Naive thymus-derived CD4-positive, alpha-beta T cell (primary cell): ENCODE measurements at regions of chr13 and their contacts with region 1.

Region 1: DNA sequence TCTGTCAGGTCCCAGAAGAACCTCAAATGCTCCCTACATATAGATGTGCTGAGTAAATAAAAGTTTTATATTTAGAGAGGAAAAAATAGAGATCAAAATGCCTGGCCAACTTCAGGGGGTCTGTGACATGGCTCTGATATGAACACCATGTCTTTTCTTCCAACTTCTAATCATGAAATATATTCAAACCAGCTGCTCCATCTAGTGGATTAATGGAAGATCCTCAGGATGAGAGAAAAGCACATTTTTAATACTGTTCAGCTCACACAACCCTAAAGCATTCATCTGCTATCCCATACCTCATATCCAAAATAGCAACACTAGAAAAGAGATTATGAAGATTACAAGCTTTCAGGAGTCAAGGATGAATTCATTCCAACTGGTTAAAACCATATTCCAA is 56.0 kb upstream of the DOCK9 start:
- DNase-seq: peak in 5 of 9 donors; percentile 33 to 53 (median 41)
- ATAC-seq: peak; percentile 69
- H3K4me3 ChIP-seq: no peak overlapping the region
- H3K4me3 Mint-ChIP-seq: peak overlapping the region in 2 of 10 donors; percentile 2
- H3K27ac ChIP-seq: no peak overlapping the region
- H3K27ac Mint-ChIP-seq: peak overlapping the region in 6 of 9 donors; percentile 0 to 81 (median 18)
- H3K4me1 ChIP-seq: peaks cover 0 to 15% of the 10 kb centered on the region in 2 donors
- H3K4me1 Mint-ChIP-seq: peaks cover 18 to 66% (median 59%) of the 10 kb centered on the region in 7 donors
- H3K27me3 ChIP-seq: no peaks in the 10 kb centered on the region
- H3K27me3 Mint-ChIP-seq: peaks cover 0 to 9% (median 0%) of the 10 kb centered on the region in 5 donors

Region 2: GRCh38 chr13:98869408-98870090 is 164.3 kb before region 1 on chr13:
- CTCF ChIA-PET with region 1: interaction called, 3 read pairs
- POLR2A ChIA-PET with region 1: interaction called, 3 read pairs
- intact Hi-C with region 1: loop called (anchors 1 to 5 kb)
- DNase-seq: peak in 1 of 9 donors; percentile 3
- ATAC-seq: no peak
- H3K4me3 ChIP-seq: no peak overlapping the region
- H3K4me3 Mint-ChIP-seq: no peak overlapping the region
- H3K27ac ChIP-seq: no peak overlapping the region
- H3K27ac Mint-ChIP-seq: peak overlapping the region in 3 of 9 donors; percentile 11 to 57 (median 23)
- H3K4me1 ChIP-seq: no peaks in the 10 kb centered on the region
- H3K4me1 Mint-ChIP-seq: peaks cover 0 to 33% (median 17%) of the 10 kb centered on the region in 7 donors
- H3K27me3 ChIP-seq: no peaks in the 10 kb centered on the region
- H3K27me3 Mint-ChIP-seq: no peaks in the 10 kb centered on the region

Region 3: DNA sequence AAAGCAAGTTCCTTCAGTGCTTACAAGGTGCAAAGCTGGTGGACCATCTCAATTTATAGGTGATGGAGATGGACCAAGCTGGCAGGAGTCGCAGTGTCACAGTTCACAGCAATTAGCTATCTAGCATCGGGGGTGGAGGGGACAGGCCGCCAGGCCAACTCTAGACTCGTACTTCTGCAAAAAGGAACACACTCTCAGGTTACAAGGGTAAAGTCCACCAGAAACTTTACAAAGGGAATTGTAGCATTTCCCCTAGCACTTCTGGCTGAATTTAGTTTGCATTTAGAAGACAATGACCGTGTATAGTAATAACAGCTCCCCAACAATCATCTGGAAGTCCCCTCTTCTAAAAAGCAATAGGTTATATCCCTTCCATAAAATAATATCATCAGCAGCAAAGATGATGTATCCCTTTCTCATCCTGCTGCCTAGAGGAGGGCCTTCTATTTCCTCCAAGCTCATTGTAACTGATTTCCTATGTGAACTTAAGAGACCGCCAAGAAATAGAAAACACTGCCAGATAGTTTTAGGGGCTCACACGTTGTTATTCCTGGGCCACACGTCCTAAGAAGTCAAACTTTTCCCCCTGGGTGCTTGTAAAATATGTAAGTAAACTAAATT is 47.5 kb before region 1 on chr13:
- CTCF ChIA-PET with region 1: interaction called, 3 read pairs
- POLR2A ChIA-PET with region 1: interaction called, 4 read pairs
- intact Hi-C with region 1: loop called in 1 of 2 experiments (anchors 5 kb)
- DNase-seq: no peak
- ATAC-seq: no peak
- H3K4me3 ChIP-seq: no peak overlapping the region
- H3K4me3 Mint-ChIP-seq: peak overlapping the region in 2 of 10 donors; percentile 3 to 9
- H3K27ac ChIP-seq: peak overlapping the region; percentile 3
- H3K27ac Mint-ChIP-seq: peak overlapping the region in 8 of 9 donors; percentile 2 to 91 (median 75)
- H3K4me1 ChIP-seq: peaks cover 12 to 20% of the 10 kb centered on the region in 2 donors
- H3K4me1 Mint-ChIP-seq: peaks cover 29 to 93% (median 85%) of the 10 kb centered on the region in 7 donors
- H3K27me3 ChIP-seq: no peaks in the 10 kb centered on the region
- H3K27me3 Mint-ChIP-seq: no peaks in the 10 kb centered on the region

Region 4: GRCh38 chr13:99045396-99045795 is 11.6 kb after region 1 on chr13:
- CTCF ChIA-PET with region 1: interaction called, 6 read pairs
- POLR2A ChIA-PET with region 1: interaction called, 9 read pairs
- intact Hi-C with region 1: loop called (anchors 1 kb)
- DNase-seq: no peak
- ATAC-seq: no peak
- H3K4me3 ChIP-seq: no peak overlapping the region
- H3K4me3 Mint-ChIP-seq: peak overlapping the region; percentile 60 to 88 (median 80)
- H3K27ac ChIP-seq: peak overlapping the region; percentile 70
- H3K27ac Mint-ChIP-seq: peak overlapping the region; percentile 85 to 97 (median 94)
- H3K4me1 ChIP-seq: peaks cover 79 to 93% of the 10 kb centered on the region in 2 donors
- H3K4me1 Mint-ChIP-seq: peaks cover 64 to 100% (median 89%) of the 10 kb centered on the region in 7 donors
- H3K27me3 ChIP-seq: no peaks in the 10 kb centered on the region
- H3K27me3 Mint-ChIP-seq: peaks cover 0 to 19% (median 0%) of the 10 kb centered on the region in 5 donors

Region 5: DNA sequence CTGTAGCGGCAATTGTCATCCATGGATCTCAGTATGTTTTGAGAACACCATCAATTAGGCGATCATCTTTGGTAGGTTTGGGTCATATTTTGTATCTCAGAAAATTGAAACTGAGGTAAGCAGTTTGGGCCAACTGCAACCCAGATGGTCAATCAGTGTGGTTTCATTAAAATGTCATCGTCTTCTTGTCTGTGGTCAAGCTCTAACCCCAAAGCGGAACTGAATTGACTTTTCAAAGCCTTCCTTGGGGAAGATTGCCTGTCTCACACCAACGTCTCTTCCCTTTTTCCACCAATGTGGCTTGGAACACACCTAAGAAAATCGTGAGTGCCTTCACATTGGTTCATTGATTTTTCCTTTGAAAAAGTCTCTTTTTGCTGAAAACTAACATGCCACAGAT is 110.5 kb after region 1 on chr13:
- CTCF ChIA-PET with region 1: no interaction called
- POLR2A ChIA-PET with region 1: no interaction called
- intact Hi-C with region 1: loop called in 1 of 2 experiments (anchors 2 kb)
- DNase-seq: no peak
- ATAC-seq: peak; percentile 51
- H3K4me3 ChIP-seq: no peak overlapping the region
- H3K4me3 Mint-ChIP-seq: no peak overlapping the region
- H3K27ac ChIP-seq: no peak overlapping the region
- H3K27ac Mint-ChIP-seq: no peak overlapping the region
- H3K4me1 ChIP-seq: no peaks in the 10 kb centered on the region
- H3K4me1 Mint-ChIP-seq: peaks cover 0 to 8% (median 0%) of the 10 kb centered on the region in 7 donors
- H3K27me3 ChIP-seq: no peaks in the 10 kb centered on the region
- H3K27me3 Mint-ChIP-seq: peaks cover 0 to 28% (median 9%) of the 10 kb centered on the region in 5 donors